AG04450 (cell line): ENCODE measurements at regions of chr14 and their contacts with region 1.

Region 1: GRCh38 chr14:59020382-59020781 is 168.1 kb upstream of the DAAM1 start:
- DNase-seq: no peak
- H3K4me3 ChIP-seq: no peak overlapping the region
- H3K27ac ChIP-seq: no peak overlapping the region
- H3K27me3 ChIP-seq: no peaks in the 10 kb centered on the region
- CTCF ChIP-seq: peak; percentile 65

Region 2: GRCh38 chr14:59009967-59010366 is 10.4 kb before region 1 on chr14:
- CTCF ChIA-PET with region 1: interaction called, 17 read pairs
- POLR2A ChIA-PET with region 1: no interaction called
- DNase-seq: no peak
- H3K4me3 ChIP-seq: no peak overlapping the region
- H3K27ac ChIP-seq: no peak overlapping the region
- H3K27me3 ChIP-seq: no peaks in the 10 kb centered on the region
- CTCF ChIP-seq: no peak

Region 3: GRCh38 chr14:59046746-59047145 is 26.4 kb after region 1 on chr14:
- CTCF ChIA-PET with region 1: no interaction called
- POLR2A ChIA-PET with region 1: no interaction called
- DNase-seq: no peak
- H3K4me3 ChIP-seq: no peak overlapping the region
- H3K27ac ChIP-seq: no peak overlapping the region
- H3K27me3 ChIP-seq: no peaks in the 10 kb centered on the region
- CTCF ChIP-seq: no peak

Region 4: DNA sequence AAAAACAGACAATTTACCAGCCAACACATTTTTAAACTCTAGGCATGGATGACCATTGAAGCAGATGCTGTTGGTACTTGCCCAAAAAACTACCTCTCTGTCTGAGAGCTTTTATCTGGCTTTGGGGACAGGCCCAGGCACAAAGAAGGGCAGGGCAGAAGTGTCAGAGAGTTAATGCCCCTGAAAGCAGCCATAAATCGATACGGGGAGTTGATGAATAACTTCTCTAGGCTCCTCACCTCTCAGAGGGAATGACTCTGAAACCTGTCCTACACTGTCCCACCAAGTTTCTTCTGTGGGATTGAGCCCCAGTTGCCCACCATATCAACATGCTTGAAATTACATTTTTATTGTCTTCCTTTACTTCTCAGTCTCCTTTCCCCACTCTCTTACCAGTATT is 55.1 kb after region 1 on chr14:
- CTCF ChIA-PET with region 1: no interaction called
- POLR2A ChIA-PET with region 1: no interaction called
- DNase-seq: no peak
- H3K4me3 ChIP-seq: no peak overlapping the region
- H3K27ac ChIP-seq: no peak overlapping the region
- H3K27me3 ChIP-seq: no peaks in the 10 kb centered on the region
- CTCF ChIP-seq: no peak